GM23248 (cell line): ENCODE measurements at regions of chr11 and their contacts with region 1.

Region 1: DNA sequence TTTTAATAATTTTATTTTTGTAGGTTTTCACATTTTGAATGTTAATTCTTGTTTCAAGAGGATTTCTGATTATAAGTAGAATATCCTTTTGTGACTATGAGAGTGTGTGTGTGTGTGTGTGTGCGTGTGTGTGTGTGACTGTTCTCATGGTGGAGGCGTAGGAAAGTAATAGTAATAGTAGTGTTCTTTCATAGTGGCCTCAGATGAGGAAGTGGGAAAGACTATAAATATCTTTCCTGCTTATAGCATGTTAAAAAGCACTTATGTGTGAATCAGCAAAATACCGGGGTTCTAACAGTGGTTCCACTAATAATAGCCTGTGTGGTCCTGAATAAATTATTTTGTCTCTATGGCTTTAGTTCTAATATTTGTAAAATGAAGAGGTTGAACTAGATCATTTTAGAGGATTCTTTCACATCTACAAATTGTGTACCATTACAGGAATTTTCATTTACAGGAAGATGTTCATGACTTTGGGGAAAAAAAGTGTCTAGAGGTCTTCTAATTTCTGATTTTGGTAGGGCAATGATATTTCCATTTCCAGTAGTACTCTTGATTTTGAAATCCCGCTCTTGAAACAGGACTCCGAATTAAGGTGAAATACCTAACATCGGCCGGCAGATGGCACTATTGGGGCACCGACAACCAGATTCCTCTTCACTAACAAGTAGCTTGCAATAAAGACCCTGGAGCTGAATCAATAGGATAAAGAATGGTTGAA is 29.9 kb upstream of the OR10G7 start:
- DNase-seq: peak; percentile 66
- H3K4me3 ChIP-seq: no peak overlapping the region
- H3K27ac ChIP-seq: no peak overlapping the region
- H3K4me1 ChIP-seq: no peaks in the 10 kb centered on the region
- H3K27me3 ChIP-seq: peaks cover 64% of the 10 kb centered on the region

Region 2: DNA sequence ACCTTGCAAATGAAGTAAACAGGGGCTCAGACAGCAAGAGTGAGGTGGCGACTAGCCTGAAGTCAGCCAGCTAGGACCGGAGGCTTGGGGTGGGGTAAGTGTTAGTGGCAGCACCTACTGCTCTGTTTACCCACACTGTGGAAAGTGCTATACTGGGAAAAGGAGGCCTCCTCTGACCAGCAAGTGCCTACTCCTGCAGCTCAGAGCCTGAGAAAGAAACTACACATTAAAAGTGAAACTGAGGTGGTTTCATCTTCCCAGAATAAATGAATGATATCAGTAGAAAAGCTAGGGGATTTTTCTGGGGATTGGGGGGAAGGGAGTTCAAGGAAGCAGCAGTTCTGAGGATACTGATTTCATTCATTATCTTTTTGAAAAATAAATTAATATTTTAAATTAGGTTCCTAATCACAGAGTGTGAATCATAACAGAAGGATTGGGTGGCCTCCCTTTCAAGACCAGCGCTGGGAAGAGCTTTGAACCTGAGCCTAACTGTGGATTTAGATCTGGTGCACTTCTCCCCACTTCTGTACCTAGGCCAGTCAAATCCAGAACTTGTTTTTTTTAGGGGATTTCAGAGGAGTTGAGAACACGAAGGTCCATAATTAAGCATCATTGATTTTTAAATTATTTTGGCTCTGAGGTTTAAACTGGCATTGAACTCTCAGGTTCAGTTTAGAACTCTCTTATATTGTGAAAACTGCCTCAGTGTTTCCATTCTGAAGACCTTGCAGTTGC is 689.1 kb before region 1 on chr11:
- in situ Hi-C with region 1: no loop called
- DNase-seq: no peak
- H3K4me3 ChIP-seq: no peak overlapping the region
- H3K27ac ChIP-seq: no peak overlapping the region
- H3K4me1 ChIP-seq: peaks cover 10% of the 10 kb centered on the region
- H3K27me3 ChIP-seq: peaks cover 6% of the 10 kb centered on the region; the same call in 1 of the 2 replicates

Region 3: GRCh38 chr11:123511037-123511870 is 559.8 kb before region 1 on chr11:
- in situ Hi-C with region 1: no loop called
- DNase-seq: peak; percentile 94
- H3K4me3 ChIP-seq: no peak overlapping the region
- H3K27ac ChIP-seq: no peak overlapping the region
- H3K4me1 ChIP-seq: peaks cover 9% of the 10 kb centered on the region; the same call in 1 of the 2 replicates
- H3K27me3 ChIP-seq: no peaks in the 10 kb centered on the region

Region 4: GRCh38 chr11:123995119-123995518 is 76.0 kb before region 1 on chr11 and contains the start of gene OR10G6:
- in situ Hi-C with region 1: loop called (anchors 10 kb)
- DNase-seq: no peak
- H3K4me3 ChIP-seq: no peak within 1 kb of the TSS
- H3K27ac ChIP-seq: no peak within 1 kb of the TSS
- H3K4me1 ChIP-seq: no peaks in the 10 kb centered on the region
- H3K27me3 ChIP-seq: peaks cover 12% of the 10 kb centered on the region; the same call in 1 of the 2 replicates
- total RNA-seq, gene OR10G6: not detected in 2 replicates

Region 5: GRCh38 chr11:124194698-124195410 is 123.8 kb after region 1 on chr11:
- in situ Hi-C with region 1: loop called (anchors 10 kb)
- DNase-seq: peak; percentile 66
- H3K4me3 ChIP-seq: no peak overlapping the region
- H3K27ac ChIP-seq: no peak overlapping the region
- H3K4me1 ChIP-seq: no peaks in the 10 kb centered on the region
- H3K27me3 ChIP-seq: peaks cover 12% of the 10 kb centered on the region; the same call in 1 of the 2 replicates

Region 6: GRCh38 chr11:124586238-124586860 is 515.3 kb after region 1 on chr11:
- in situ Hi-C with region 1: loop called (anchors 25 kb)
- DNase-seq: peak; percentile 69
- H3K4me3 ChIP-seq: no peak overlapping the region
- H3K27ac ChIP-seq: no peak overlapping the region
- H3K4me1 ChIP-seq: no peaks in the 10 kb centered on the region
- H3K27me3 ChIP-seq: peaks cover 35% of the 10 kb centered on the region

Region 7: DNA sequence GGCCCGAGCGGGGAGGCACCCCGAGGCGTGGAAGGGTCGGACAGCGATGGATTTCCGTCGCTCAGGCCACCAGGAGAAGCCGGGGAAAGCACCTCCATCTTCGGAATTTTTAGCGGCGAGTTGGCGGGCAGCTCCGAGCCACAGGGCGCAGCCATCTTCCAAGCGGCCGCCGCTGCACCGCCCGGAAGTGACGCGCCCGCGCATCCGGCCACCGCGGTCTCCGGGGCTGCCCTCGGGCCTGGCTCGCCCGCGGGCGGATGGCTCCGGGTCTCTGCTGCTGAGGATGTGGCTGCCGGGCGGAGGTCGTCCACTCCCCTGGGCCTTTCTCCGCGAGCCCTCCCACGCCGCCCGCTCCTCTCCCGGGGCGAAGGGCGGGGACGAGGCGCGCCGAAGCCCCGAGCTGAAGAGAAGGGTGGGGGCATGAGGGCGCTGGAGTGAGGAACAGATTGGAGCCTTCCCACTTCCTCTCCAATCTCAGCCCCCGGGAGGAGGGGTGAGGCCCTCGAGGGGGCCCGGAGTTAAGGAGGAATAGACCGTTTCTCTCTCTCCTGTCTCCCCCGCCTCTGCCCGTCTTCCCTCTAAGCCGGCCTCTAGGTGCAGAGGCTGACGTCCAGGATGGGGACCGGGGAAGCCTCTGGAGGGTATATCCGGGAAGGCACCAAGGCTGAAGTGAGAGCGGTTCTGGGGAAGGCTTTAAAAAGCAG is 729.3 kb after region 1 on chr11 and contains the start of gene MSANTD2:
- in situ Hi-C with region 1: no loop called
- DNase-seq: peak; percentile 90
- H3K4me3 ChIP-seq: peak within 1 kb of the TSS; percentile 95
- H3K27ac ChIP-seq: peak within 1 kb of the TSS; percentile 91
- H3K4me1 ChIP-seq: peaks cover 26% of the 10 kb centered on the region
- H3K27me3 ChIP-seq: no peaks in the 10 kb centered on the region
- total RNA-seq, gene MSANTD2: 8.4 and 11.5 TPM in 2 replicates